ENCODE measurements at regions of chr20 and their contacts with region 1.

Region 1: GRCh38 chr20:53594068-53595017 is 704 bp upstream of the ZNF217 start:
- DNase-seq: peak; percentile 94
- H3K4me3 Mint-ChIP-seq: peak overlapping the region; percentile 90
- H3K27ac Mint-ChIP-seq: peak overlapping the region; percentile 86
- H3K4me1 Mint-ChIP-seq: peaks cover 70% of the 10 kb centered on the region
- H3K27me3 Mint-ChIP-seq: no peaks in the 10 kb centered on the region

Region 2: GRCh38 chr20:53609491-53610445 is 15.4 kb after region 1 on chr20:
- intact Hi-C with region 1: loop called (anchors 1 kb)
- DNase-seq: peak; percentile 68
- H3K4me3 Mint-ChIP-seq: peak overlapping the region; percentile 85
- H3K27ac Mint-ChIP-seq: peak overlapping the region; percentile 94
- H3K4me1 Mint-ChIP-seq: peaks cover 30% of the 10 kb centered on the region
- H3K27me3 Mint-ChIP-seq: no peaks in the 10 kb centered on the region

Region 3: GRCh38 chr20:53623454-53624211 is 29.3 kb after region 1 on chr20:
- intact Hi-C with region 1: loop called (anchors 2 kb)
- DNase-seq: peak; percentile 29
- H3K4me3 Mint-ChIP-seq: peak overlapping the region; percentile 74
- H3K27ac Mint-ChIP-seq: peak overlapping the region; percentile 94
- H3K4me1 Mint-ChIP-seq: peaks cover 37% of the 10 kb centered on the region
- H3K27me3 Mint-ChIP-seq: no peaks in the 10 kb centered on the region

Region 4: GRCh38 chr20:53643031-53643832 is 48.9 kb after region 1 on chr20:
- intact Hi-C with region 1: loop called (anchors 1 kb)
- DNase-seq: peak; percentile 66
- H3K4me3 Mint-ChIP-seq: peak overlapping the region; percentile 76
- H3K27ac Mint-ChIP-seq: peak overlapping the region; percentile 97
- H3K4me1 Mint-ChIP-seq: peaks cover 39% of the 10 kb centered on the region
- H3K27me3 Mint-ChIP-seq: no peaks in the 10 kb centered on the region

Region 5: GRCh38 chr20:53652090-53652858 is 57.9 kb after region 1 on chr20:
- intact Hi-C with region 1: loop called (anchors 1 kb)
- DNase-seq: no peak
- H3K4me3 Mint-ChIP-seq: peak overlapping the region; percentile 70
- H3K27ac Mint-ChIP-seq: peak overlapping the region; percentile 97
- H3K4me1 Mint-ChIP-seq: peaks cover 41% of the 10 kb centered on the region
- H3K27me3 Mint-ChIP-seq: no peaks in the 10 kb centered on the region

Region 6: DNA sequence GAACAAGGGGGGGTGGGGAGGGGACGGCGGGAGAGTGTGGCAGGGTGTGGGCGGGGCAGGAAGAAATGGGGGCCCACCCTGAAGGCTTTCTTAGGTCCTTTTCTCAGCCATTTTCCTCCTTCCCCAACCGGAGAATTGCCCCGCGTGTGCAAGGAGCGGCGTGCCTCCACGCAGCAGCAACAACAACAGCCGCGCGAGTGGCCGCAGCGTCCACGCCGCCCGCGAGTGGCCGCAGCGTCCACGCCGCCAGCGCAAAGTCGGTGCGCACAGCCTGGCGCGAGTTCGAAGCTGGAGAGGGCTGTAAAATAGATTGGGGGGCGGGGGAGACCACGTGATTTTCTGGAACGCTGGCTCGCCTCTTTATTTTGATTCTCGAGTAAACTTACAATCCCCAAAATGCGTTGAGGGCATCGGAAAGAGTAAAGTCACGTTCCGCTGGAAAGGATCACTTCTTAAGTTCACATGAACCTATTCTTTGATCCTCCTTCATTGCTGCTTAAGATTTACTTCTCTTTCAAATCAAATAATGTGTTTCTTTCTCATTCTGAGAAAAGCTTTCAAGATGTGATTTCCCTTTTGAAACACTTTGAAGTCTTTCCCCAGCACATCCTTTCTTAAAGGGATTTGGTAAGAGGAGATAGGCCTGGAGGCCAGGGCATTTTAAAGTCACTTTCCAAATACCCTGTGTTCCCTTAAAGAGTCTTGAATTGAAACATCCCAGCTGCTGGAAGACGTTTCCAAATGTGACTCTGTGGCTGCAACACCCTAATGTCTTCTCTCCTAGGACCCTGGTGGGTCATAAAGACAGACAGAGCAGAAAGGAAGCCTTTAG is 66.0 kb after region 1 on chr20:
- intact Hi-C with region 1: loop called (anchors 1 kb)
- DNase-seq: no peak
- H3K4me3 Mint-ChIP-seq: peak overlapping the region; percentile 75
- H3K27ac Mint-ChIP-seq: peak overlapping the region; percentile 87
- H3K4me1 Mint-ChIP-seq: peaks cover 71% of the 10 kb centered on the region
- H3K27me3 Mint-ChIP-seq: no peaks in the 10 kb centered on the region

Measured in activated T-helper 1 cell treated with anti-CD3 and anti-CD28 coated beads, Interleukin-12 subunit alpha, Interleukin-12 subunit beta, Interleukin-2, Interleukin-4 antibody, amounts not matched to agents 30 ng/mL and 10 ng/mL and 1 ng/mL, durations not matched to agents 14 hours and 24 hours and 36 hours (primary cell).